Lower leg skin (tissue), 4 donors: ENCODE measurements at regions of chr1 and their contacts with region 1.

Region 1: DNA sequence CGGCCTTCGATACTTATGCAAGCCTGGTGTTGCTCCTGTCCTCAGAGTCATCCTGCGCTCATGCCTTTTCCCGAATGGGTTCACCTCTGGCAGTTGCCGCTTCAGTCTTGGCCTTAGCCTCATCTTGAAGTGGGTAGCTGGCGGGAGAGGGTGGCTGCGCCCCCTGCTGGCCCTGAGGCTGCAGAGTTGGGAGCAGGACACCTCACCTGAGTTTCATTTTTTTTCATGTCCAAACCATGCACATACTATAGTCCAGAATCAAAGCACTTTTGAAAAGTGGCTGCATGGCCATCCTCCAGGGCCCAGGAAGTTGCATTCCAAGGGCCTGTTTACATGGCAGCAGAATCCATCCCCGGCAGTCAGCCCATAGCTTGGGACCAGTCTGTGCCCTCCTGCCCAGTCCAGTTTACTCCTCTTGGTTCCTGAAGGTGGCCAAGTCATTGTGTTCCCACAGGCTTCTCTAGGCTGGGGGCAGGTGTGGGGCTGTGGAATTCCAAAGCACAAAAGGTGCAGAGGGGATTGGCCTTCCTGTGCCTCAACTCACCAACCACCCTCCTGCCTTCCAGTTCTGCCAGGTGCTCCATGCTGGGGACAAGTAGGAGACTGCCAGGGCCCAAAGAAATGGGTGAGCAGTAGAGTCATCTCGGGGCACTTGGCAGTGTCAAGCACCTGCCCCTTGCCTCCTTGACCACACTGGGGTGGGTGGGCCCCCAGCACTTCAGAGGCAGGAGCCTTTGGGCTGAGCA is 44.0 kb downstream of the YARS1 start:
- DNase-seq: peak; percentile 76 to 94
- H3K4me3 ChIP-seq: no peak overlapping the region
- CTCF ChIP-seq: peak in 1 of 3 donors; percentile 86
- POLR2A ChIP-seq: no peak

Region 2: GRCh38 chr1:32714277-32714676 is 58.9 kb before region 1 on chr1:
- intact Hi-C with region 1: loop called (anchors 5 kb)
- DNase-seq: no peak
- H3K4me3 ChIP-seq: no peak overlapping the region
- CTCF ChIP-seq: no peak
- POLR2A ChIP-seq: no peak